ENCODE measurements at regions of chr16 and their contacts with region 1.

Region 1: GRCh38 chr16:22297114-22297878 is at the start of gene POLR3E:
- DNase-seq: peak; percentile 100
- ATAC-seq: peak; percentile 94
- H3K4me3 Mint-ChIP-seq: peak within 1 kb of the TSS; percentile 91
- H3K27ac Mint-ChIP-seq: peak within 1 kb of the TSS; percentile 92
- H3K4me1 Mint-ChIP-seq: peaks cover 45% of the 10 kb centered on the region
- H3K27me3 Mint-ChIP-seq: no peaks in the 10 kb centered on the region
- CTCF ChIP-seq: peak; percentile 57
- total RNA-seq, gene POLR3E: 92.3 and 97.1 TPM in 2 replicates

Region 2: DNA sequence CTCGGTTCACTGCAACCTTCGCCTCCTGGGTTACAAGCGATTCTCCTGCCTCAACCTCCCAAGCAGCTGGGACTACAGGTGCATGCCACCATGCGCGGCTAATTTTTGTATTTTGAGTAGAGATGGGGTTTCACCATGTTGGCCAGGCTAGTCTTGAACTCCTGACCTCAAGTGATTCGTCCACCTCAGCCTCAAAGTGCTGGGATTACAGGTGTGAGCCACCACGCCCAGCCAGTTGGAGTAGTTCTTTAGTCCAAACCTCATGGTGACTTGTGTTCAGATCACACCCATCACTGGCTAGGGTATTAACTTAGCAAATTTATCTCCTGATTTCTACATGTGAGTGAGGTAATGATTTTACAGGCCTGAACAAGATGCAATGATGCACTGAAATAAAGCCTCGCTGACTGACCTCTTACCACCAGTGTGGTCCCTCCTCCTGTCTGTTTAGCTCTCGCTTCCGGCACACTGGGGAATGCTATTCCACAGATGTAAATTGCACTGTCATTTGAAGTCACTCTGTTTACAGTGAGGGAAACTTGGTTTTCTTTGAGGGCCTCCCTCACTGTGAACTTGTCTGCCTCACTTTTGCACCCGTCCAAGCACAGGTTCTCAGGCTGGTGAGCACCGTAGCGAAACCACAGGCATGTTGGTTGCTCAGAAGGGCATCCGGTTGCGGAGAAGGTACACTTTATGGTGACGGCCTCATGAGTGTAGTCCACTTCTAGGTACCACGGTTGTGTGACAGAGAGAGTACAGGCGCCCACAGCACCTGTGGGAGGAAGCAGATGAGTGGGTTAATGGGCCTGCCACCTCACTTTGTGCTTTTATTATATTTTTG is 650.4 kb before region 1 on chr16:
- CTCF ChIA-PET with region 1: no interaction called
- POLR2A ChIA-PET with region 1: no interaction called
- intact Hi-C with region 1: loop called (anchors 1 kb)
- DNase-seq: peak; percentile 42
- ATAC-seq: peak; percentile 83
- H3K4me3 Mint-ChIP-seq: peak overlapping the region; percentile 53
- H3K27ac Mint-ChIP-seq: peak overlapping the region; percentile 89
- H3K4me1 Mint-ChIP-seq: peaks cover 77% of the 10 kb centered on the region
- H3K27me3 Mint-ChIP-seq: no peaks in the 10 kb centered on the region
- CTCF ChIP-seq: no peak

Region 3: GRCh38 chr16:22001591-22001990 is 295.7 kb before region 1 on chr16:
- CTCF ChIA-PET with region 1: interaction called, 5 read pairs
- POLR2A ChIA-PET with region 1: interaction called, 3 read pairs
- intact Hi-C with region 1: loop called (anchors 1 kb)
- DNase-seq: no peak
- ATAC-seq: no peak
- H3K4me3 Mint-ChIP-seq: no peak overlapping the region
- H3K27ac Mint-ChIP-seq: no peak overlapping the region
- H3K4me1 Mint-ChIP-seq: peaks cover 10% of the 10 kb centered on the region
- H3K27me3 Mint-ChIP-seq: no peaks in the 10 kb centered on the region
- CTCF ChIP-seq: no peak

Region 4: DNA sequence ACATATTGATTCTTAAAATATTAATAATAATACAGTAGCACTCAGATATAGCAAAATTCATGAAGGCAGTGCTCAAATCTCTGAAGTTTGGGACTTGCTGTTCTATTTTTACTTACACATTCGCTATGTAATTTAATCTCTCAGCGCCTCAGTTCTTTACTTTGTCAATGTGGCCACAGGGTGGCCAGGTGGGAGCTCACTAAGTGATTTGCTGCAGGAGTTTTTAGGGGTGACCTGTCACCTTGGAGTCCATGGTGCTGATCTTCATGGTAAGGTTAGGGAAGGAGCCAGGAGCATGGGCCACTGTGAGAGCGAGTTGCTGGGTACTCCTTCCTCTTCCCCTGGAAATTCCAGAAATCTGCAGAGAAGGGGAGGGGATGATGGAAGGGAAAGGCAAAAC is 176.9 kb before region 1 on chr16:
- CTCF ChIA-PET with region 1: no interaction called
- POLR2A ChIA-PET with region 1: no interaction called
- intact Hi-C with region 1: loop called (anchors 1 kb)
- DNase-seq: no peak
- ATAC-seq: no peak
- H3K4me3 Mint-ChIP-seq: no peak overlapping the region
- H3K27ac Mint-ChIP-seq: no peak overlapping the region
- H3K4me1 Mint-ChIP-seq: peaks cover 10% of the 10 kb centered on the region
- H3K27me3 Mint-ChIP-seq: no peaks in the 10 kb centered on the region
- CTCF ChIP-seq: no peak

Region 5: DNA sequence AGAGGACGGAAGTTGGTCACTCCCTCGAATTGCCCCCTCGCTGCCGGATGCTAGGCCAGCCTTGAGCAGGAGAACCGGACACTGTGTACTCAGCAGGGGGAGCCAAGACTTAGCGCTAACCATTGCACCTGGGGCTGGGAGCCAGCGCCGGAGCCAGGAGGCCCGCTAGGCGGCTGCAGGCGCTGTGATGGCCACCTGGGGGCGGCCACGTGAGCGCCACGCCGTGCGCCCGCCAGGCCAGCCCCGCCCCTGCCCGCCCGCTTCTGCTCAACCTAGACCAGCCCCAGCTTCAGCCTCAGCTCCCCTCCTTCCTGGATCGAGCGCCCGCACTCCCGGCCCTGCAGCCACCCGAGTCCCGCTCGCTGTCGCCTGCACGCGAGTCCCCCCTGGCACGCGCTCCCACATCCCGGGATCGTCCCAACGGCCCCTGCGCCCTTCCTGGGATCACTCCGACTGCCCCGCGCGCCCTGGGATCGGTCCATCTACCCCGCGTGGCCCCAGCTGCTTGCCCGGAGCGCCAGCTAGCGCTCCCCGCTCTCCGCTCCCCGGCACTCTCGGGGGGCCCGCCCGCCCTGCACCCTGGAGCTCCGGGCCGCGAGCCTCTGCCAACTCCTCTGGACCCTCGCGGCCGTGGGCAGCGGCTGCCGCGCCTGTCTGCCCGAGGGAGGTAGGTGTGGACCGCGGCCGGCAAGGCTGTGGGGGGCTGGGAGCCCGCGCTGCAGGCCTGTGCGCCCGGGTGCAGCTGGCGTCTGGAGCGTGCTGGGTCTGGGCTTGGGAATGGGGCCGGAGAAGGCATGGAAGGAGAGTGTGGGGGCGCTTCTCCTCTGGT is 91.1 kb before region 1 on chr16 and contains the start of gene EEF2K:
- CTCF ChIA-PET with region 1: interaction called, 8 read pairs
- POLR2A ChIA-PET with region 1: interaction called, 14 read pairs
- intact Hi-C with region 1: loop called (anchors 1 kb)
- DNase-seq: peak; percentile 75
- ATAC-seq: peak; percentile 80
- H3K4me3 Mint-ChIP-seq: peak within 1 kb of the TSS; percentile 89
- H3K27ac Mint-ChIP-seq: peak within 1 kb of the TSS; percentile 77
- H3K4me1 Mint-ChIP-seq: peaks cover 38% of the 10 kb centered on the region
- H3K27me3 Mint-ChIP-seq: no peaks in the 10 kb centered on the region
- CTCF ChIP-seq: peak; percentile 39
- total RNA-seq, gene EEF2K: 26.5 and 29.7 TPM in 2 replicates

Region 6: GRCh38 chr16:22240023-22240710 is 57.1 kb before region 1 on chr16:
- CTCF ChIA-PET with region 1: interaction called, 5 read pairs
- POLR2A ChIA-PET with region 1: no interaction called
- intact Hi-C with region 1: loop called (anchors 1 kb)
- DNase-seq: no peak
- ATAC-seq: no peak
- H3K4me3 Mint-ChIP-seq: no peak overlapping the region
- H3K27ac Mint-ChIP-seq: no peak overlapping the region
- H3K4me1 Mint-ChIP-seq: peaks cover 20% of the 10 kb centered on the region
- H3K27me3 Mint-ChIP-seq: no peaks in the 10 kb centered on the region
- CTCF ChIP-seq: no peak

Region 7: GRCh38 chr16:22425036-22425801 is 127.9 kb after region 1 on chr16:
- CTCF ChIA-PET with region 1: no interaction called
- POLR2A ChIA-PET with region 1: no interaction called
- intact Hi-C with region 1: loop called (anchors 10 kb)
- DNase-seq: no peak
- ATAC-seq: no peak
- H3K4me3 Mint-ChIP-seq: no peak overlapping the region
- H3K27ac Mint-ChIP-seq: no peak overlapping the region
- H3K4me1 Mint-ChIP-seq: no peaks in the 10 kb centered on the region
- H3K27me3 Mint-ChIP-seq: no peaks in the 10 kb centered on the region
- CTCF ChIP-seq: no peak

Measured in activated B cell treated with CpG ODN at 0.5 μM for 24 hours (primary cell).